ENCODE measurements at regions of chr7 and their contacts with region 1.

Region 1: DNA sequence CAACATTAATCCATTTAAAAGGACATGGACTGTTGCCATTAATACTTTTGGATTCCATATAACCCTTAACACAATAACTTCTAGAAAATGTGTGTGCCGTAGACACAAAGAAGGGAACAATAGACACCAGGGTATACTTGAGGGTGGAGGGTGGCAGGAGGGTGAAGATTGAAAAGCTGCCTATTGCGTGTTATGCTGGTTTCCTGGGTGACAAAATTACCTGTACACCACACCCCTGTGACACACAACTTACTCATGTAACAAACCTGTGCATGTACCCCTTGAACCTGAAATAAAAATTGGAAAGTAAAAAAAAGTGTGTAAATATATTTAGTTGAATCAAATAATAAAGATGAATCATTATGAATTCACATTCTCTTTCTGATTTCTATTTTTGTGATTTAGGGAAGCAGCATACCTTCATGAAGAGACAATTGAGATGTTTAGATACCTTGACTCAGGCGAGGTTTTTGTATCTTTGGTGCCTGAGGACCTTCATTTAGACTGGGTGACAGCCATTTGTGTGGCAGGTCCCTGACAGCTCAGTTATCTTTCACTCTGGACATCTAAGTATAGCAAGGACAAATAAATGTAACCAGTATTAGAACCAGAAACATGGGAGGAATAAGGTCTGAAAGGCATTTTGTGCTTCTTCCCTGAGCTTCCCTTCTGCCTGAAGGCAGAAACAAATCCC is 28.7 kb downstream of the GIMAP8 start:
- DNase-seq: peak in 1 of 2 donors; percentile 35
- H3K4me3 ChIP-seq: no peak overlapping the region
- H3K27ac ChIP-seq: peak overlapping the region in 3 of 5 donors; percentile 8 to 75 (median 12)
- H3K4me1 ChIP-seq: peaks cover 0 to 17% (median 0%) of the 10 kb centered on the region in 4 donors
- H3K27me3 ChIP-seq: no peaks in the 10 kb centered on the region
- CTCF ChIP-seq: no peak
- EP300 ChIP-seq: no peak
- POLR2A ChIP-seq: no peak

Region 2: GRCh38 chr7:150317748-150318444 is 161.3 kb before region 1 on chr7:
- intact Hi-C with region 1: no loop called
- DNase-seq: no peak
- H3K4me3 ChIP-seq: no peak overlapping the region
- H3K27ac ChIP-seq: no peak overlapping the region
- H3K4me1 ChIP-seq: peaks cover 12 to 30% (median 14%) of the 10 kb centered on the region in 4 donors
- H3K27me3 ChIP-seq: no peaks in the 10 kb centered on the region
- CTCF ChIP-seq: no peak
- EP300 ChIP-seq: no peak
- POLR2A ChIP-seq: no peak

Region 3: DNA sequence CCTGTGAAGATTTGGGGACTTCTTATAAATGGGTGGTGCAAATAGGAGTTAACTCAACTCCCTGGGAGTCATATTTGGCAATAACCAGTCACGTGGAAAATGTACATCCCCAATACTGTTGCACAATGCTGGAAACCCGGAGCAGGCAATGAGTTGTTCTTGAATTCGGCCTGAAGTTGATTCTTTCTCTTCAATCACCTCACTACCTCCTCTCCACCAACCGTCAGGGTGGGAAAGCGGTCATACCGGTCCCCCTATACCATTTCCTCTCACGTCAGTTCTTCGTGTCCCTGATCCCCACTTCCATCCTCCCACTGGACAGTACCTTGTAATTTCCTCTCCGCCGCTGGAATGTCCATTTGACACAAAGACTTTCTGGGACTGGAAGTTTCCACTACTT is 260.9 kb after region 1 on chr7:
- intact Hi-C with region 1: loop called (anchors 10 kb)
- DNase-seq: no peak
- H3K4me3 ChIP-seq: peak overlapping the region; percentile 35 to 52 (median 47)
- H3K27ac ChIP-seq: peak overlapping the region in 3 of 5 donors; percentile 31 to 80 (median 71)
- H3K4me1 ChIP-seq: peaks cover 8 to 34% (median 16%) of the 10 kb centered on the region in 4 donors
- H3K27me3 ChIP-seq: peaks cover 0 to 5% (median 0%) of the 10 kb centered on the region in 3 donors
- CTCF ChIP-seq: no peak
- EP300 ChIP-seq: no peak
- POLR2A ChIP-seq: no peak